CD8-positive, alpha-beta T cell (primary cell): ENCODE measurements at regions of chr14 and their contacts with region 1.

Region 1: GRCh38 chr14:105075379-105076295 is 10.4 kb upstream of the GPR132 start:
- DNase-seq: peak in 4 of 9 experiments; percentile 28 to 64 (median 40)
- ATAC-seq: peak; percentile 54
- H3K4me3 ChIP-seq: no peak overlapping the region
- H3K4me3 Mint-ChIP-seq: peak overlapping the region; percentile 29
- H3K27ac ChIP-seq: peak overlapping the region in 1 of 2 experiments; percentile 25
- H3K27ac Mint-ChIP-seq: peak overlapping the region; percentile 82
- H3K4me1 ChIP-seq: peaks cover 39% of the 10 kb centered on the region
- H3K4me1 Mint-ChIP-seq: peaks cover 53% of the 10 kb centered on the region
- H3K27me3 ChIP-seq: no peaks in the 10 kb centered on the region
- H3K27me3 Mint-ChIP-seq: no peaks in the 10 kb centered on the region
- CTCF ChIP-seq: no peak

Region 2: GRCh38 chr14:104953097-104953496 is 122.5 kb before region 1 on chr14:
- CTCF ChIA-PET with region 1: no interaction called
- POLR2A ChIA-PET with region 1: no interaction called
- intact Hi-C with region 1: no loop called
- DNase-seq: no peak
- ATAC-seq: no peak
- H3K4me3 ChIP-seq: no peak overlapping the region
- H3K4me3 Mint-ChIP-seq: no peak overlapping the region
- H3K27ac ChIP-seq: no peak overlapping the region
- H3K27ac Mint-ChIP-seq: no peak overlapping the region
- H3K4me1 ChIP-seq: no peaks in the 10 kb centered on the region
- H3K4me1 Mint-ChIP-seq: no peaks in the 10 kb centered on the region
- H3K27me3 ChIP-seq: peaks cover 0 to 2% of the 10 kb centered on the region in 2 experiments
- H3K27me3 Mint-ChIP-seq: peaks cover 17% of the 10 kb centered on the region
- CTCF ChIP-seq: no peak

Region 3: DNA sequence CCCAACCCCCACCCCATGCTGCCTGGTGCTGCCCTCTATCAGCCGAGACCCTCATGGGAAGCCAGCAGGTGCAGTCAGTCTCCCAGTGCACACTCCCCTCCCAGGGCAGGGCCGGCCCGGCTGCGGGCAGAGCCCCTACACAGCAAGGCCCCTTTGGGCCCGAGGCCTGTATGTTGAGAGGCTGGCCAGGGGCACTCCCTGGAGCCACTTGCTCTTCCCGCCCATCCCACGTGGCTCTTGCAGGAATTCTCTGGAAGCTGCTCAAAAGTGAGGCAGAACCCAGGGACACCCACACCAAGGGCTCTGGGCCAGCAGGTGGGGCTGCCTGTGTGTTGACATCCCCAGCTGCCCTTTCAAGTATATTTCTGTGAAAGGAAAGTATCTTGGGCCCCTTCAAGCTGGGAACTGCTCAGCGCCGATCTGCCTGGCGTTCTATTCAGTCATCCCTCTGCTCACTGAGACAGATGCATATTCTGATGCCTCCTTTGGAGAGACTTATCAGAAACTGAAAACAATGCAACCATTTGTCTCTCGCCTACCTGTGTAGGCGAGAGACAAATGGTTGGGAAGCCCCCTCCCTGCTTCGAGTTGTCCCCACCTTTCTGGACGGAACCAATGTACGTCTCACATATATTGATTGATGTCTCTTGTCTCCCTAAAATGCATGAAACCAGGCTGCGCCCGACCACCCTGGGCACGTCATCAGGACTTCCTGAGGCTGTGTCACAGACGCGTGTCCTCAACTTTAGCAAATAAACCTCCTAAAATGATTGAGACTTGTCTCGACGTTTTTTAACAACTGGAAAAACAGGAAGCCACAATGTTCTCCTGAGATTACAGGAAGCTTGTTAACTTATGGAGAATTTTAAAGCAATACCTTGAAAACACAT is 16.4 kb before region 1 on chr14:
- CTCF ChIA-PET with region 1: interaction called, 12 read pairs
- POLR2A ChIA-PET with region 1: interaction called, 36 read pairs
- intact Hi-C with region 1: no loop called
- DNase-seq: peak in 6 of 9 experiments; percentile 48 to 93 (median 83)
- ATAC-seq: peak; percentile 77
- H3K4me3 ChIP-seq: peak overlapping the region in 1 of 2 experiments; percentile 13
- H3K4me3 Mint-ChIP-seq: peak overlapping the region; percentile 70
- H3K27ac ChIP-seq: peak overlapping the region; percentile 97 to 98
- H3K27ac Mint-ChIP-seq: peak overlapping the region; percentile 92
- H3K4me1 ChIP-seq: peaks cover 60% of the 10 kb centered on the region
- H3K4me1 Mint-ChIP-seq: peaks cover 56% of the 10 kb centered on the region
- H3K27me3 ChIP-seq: no peaks in the 10 kb centered on the region
- H3K27me3 Mint-ChIP-seq: no peaks in the 10 kb centered on the region
- CTCF ChIP-seq: peak; percentile 11

Region 4: GRCh38 chr14:105065280-105066228 is 10.1 kb before region 1 on chr14 and contains the start of gene GPR132:
- CTCF ChIA-PET with region 1: interaction called, 10 read pairs
- POLR2A ChIA-PET with region 1: interaction called, 36 read pairs
- intact Hi-C with region 1: no loop called
- DNase-seq: peak; percentile 79 to 99 (median 89)
- ATAC-seq: peak; percentile 87
- H3K4me3 ChIP-seq: peak within 1 kb of the TSS; percentile 90 to 92
- H3K4me3 Mint-ChIP-seq: peak within 1 kb of the TSS; percentile 94
- H3K27ac ChIP-seq: peak within 1 kb of the TSS; percentile 97 to 98
- H3K27ac Mint-ChIP-seq: peak within 1 kb of the TSS; percentile 98
- H3K4me1 ChIP-seq: peaks cover 88% of the 10 kb centered on the region
- H3K4me1 Mint-ChIP-seq: peaks cover 75% of the 10 kb centered on the region
- H3K27me3 ChIP-seq: no peaks in the 10 kb centered on the region
- H3K27me3 Mint-ChIP-seq: no peaks in the 10 kb centered on the region
- CTCF ChIP-seq: no peak
- total RNA-seq, gene GPR132: 91.8 to 101 TPM

Region 5: DNA sequence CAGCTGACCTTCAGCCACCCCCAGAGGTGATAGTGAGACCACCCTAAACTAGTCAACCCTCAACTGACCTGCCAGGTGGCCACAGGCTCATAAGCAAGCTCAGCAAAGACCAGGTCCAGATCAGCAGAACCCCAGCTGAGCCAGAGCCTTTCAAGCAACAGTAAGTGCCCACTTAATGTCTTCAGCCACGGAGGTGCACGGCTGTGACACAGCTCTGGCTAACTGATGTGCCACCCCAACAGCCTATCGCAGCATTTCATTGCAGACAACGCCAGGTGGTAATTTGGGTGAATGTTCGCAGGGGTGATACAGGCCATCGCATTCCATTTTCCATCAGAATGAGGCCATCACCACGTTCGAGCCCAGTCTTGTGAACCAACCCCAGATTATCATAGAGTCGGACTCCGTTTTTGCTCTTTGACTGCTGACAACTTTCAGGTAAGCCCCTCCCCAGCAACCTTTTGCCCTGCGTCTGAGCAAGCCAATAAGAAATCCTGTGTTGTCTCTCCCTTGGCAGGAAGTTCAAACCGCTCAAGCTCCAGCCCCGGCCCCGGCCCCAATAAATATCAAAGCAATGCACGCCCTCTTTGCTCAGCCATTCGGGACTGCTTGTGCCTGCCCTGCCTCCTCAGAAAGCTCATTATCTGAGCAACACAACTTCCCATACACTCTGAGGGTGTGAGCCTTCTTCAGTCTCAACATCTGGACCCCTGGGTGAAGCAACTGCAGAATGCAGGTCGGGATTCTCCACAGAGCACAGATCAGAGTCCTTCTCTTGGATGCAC is 48.5 kb after region 1 on chr14:
- CTCF ChIA-PET with region 1: no interaction called
- POLR2A ChIA-PET with region 1: no interaction called
- intact Hi-C with region 1: no loop called
- DNase-seq: peak in 1 of 9 experiments; percentile 17
- ATAC-seq: no peak
- H3K4me3 ChIP-seq: no peak overlapping the region
- H3K4me3 Mint-ChIP-seq: no peak overlapping the region
- H3K27ac ChIP-seq: no peak overlapping the region
- H3K27ac Mint-ChIP-seq: no peak overlapping the region
- H3K4me1 ChIP-seq: no peaks in the 10 kb centered on the region
- H3K4me1 Mint-ChIP-seq: peaks cover 9% of the 10 kb centered on the region
- H3K27me3 ChIP-seq: no peaks in the 10 kb centered on the region
- H3K27me3 Mint-ChIP-seq: peaks cover 41% of the 10 kb centered on the region
- CTCF ChIP-seq: no peak